ENCODE measurements at regions of chr5 and their contacts with region 1.

Region 1: GRCh38 chr5:137778772-137779564 is 24.8 kb upstream of the HNRNPA0 start:
- DNase-seq: peak in 4 of 14 experiments; percentile 4 to 55 (median 32)
- ATAC-seq: no peak
- H3K4me3 ChIP-seq: no peak overlapping the region
- H3K4me3 Mint-ChIP-seq: no peak overlapping the region
- H3K27ac ChIP-seq: no peak overlapping the region
- H3K27ac Mint-ChIP-seq: no peak overlapping the region
- H3K4me1 ChIP-seq: no peaks in the 10 kb centered on the region
- H3K4me1 Mint-ChIP-seq: no peaks in the 10 kb centered on the region
- H3K27me3 ChIP-seq: no peaks in the 10 kb centered on the region
- H3K27me3 Mint-ChIP-seq: no peaks in the 10 kb centered on the region
- CTCF ChIP-seq: peak; percentile 91

Region 2: GRCh38 chr5:137730336-137730735 is 48.6 kb before region 1 on chr5:
- CTCF ChIA-PET with region 1: no interaction called
- POLR2A ChIA-PET with region 1: no interaction called
- intact Hi-C with region 1: no loop called
- DNase-seq: no peak
- ATAC-seq: no peak
- H3K4me3 ChIP-seq: no peak overlapping the region
- H3K4me3 Mint-ChIP-seq: no peak overlapping the region
- H3K27ac ChIP-seq: no peak overlapping the region
- H3K27ac Mint-ChIP-seq: no peak overlapping the region
- H3K4me1 ChIP-seq: peaks cover 17% of the 10 kb centered on the region
- H3K4me1 Mint-ChIP-seq: peaks cover 15% of the 10 kb centered on the region
- H3K27me3 ChIP-seq: no peaks in the 10 kb centered on the region
- H3K27me3 Mint-ChIP-seq: no peaks in the 10 kb centered on the region
- CTCF ChIP-seq: no peak

Region 3: GRCh38 chr5:137954131-137954879 is 175.3 kb after region 1 on chr5:
- CTCF ChIA-PET with region 1: no interaction called
- POLR2A ChIA-PET with region 1: no interaction called
- intact Hi-C with region 1: loop called in 1 of 2 experiments (anchors 10 kb)
- DNase-seq: no peak
- ATAC-seq: no peak
- H3K4me3 ChIP-seq: no peak overlapping the region
- H3K4me3 Mint-ChIP-seq: no peak overlapping the region
- H3K27ac ChIP-seq: no peak overlapping the region
- H3K27ac Mint-ChIP-seq: no peak overlapping the region
- H3K4me1 ChIP-seq: no peaks in the 10 kb centered on the region
- H3K4me1 Mint-ChIP-seq: no peaks in the 10 kb centered on the region
- H3K27me3 ChIP-seq: no peaks in the 10 kb centered on the region
- H3K27me3 Mint-ChIP-seq: no peaks in the 10 kb centered on the region
- CTCF ChIP-seq: no peak